Transverse colon (tissue), 4 donors: ENCODE measurements at regions of chr20 and their contacts with region 1.

Region 1: GRCh38 chr20:4720041-4720976 is 1.4 kb upstream of the PRND start:
- DNase-seq: peak; percentile 83
- H3K4me3 ChIP-seq: no peak overlapping the region
- H3K27ac ChIP-seq: peak overlapping the region; percentile 56 to 81 (median 61)
- H3K4me1 ChIP-seq: peaks cover 0 to 4% (median 4%) of the 10 kb centered on the region in 4 donors
- H3K27me3 ChIP-seq: no peaks in the 10 kb centered on the region
- CTCF ChIP-seq: peak; percentile 64 to 81 (median 66)
- EP300 ChIP-seq: no peak
- POLR2A ChIP-seq: no peak

Region 2: GRCh38 chr20:4601630-4602296 is 118.5 kb before region 1 on chr20:
- in situ Hi-C with region 1: loop called in 3 of 4 experiments (anchors 5 to 10 kb)
- intact Hi-C with region 1: no loop called
- DNase-seq: peak; percentile 28
- H3K4me3 ChIP-seq: no peak overlapping the region
- H3K27ac ChIP-seq: peak overlapping the region in 3 of 4 donors; percentile 33 to 84 (median 73)
- H3K4me1 ChIP-seq: peaks cover 0 to 44% (median 8%) of the 10 kb centered on the region in 4 donors
- H3K27me3 ChIP-seq: peaks cover 20% of the 10 kb centered on the region
- CTCF ChIP-seq: no peak
- EP300 ChIP-seq: no peak
- POLR2A ChIP-seq: no peak

Region 3: GRCh38 chr20:4613718-4614620 is 106.3 kb before region 1 on chr20:
- in situ Hi-C with region 1: loop called in 3 of 4 experiments (anchors 5 to 10 kb)
- intact Hi-C with region 1: loop called (anchors 2 kb)
- DNase-seq: peak; percentile 74
- H3K4me3 ChIP-seq: no peak overlapping the region
- H3K27ac ChIP-seq: peak overlapping the region in 2 of 4 donors; percentile 29 to 52
- H3K4me1 ChIP-seq: peaks cover 0 to 13% (median 5%) of the 10 kb centered on the region in 4 donors
- H3K27me3 ChIP-seq: no peaks in the 10 kb centered on the region
- CTCF ChIP-seq: peak; percentile 18 to 51 (median 23)
- EP300 ChIP-seq: no peak
- POLR2A ChIP-seq: no peak